Posterior vena cava (tissue), 2 donors: ENCODE measurements at regions of chr7 and their contacts with region 1.

Region 1: DNA sequence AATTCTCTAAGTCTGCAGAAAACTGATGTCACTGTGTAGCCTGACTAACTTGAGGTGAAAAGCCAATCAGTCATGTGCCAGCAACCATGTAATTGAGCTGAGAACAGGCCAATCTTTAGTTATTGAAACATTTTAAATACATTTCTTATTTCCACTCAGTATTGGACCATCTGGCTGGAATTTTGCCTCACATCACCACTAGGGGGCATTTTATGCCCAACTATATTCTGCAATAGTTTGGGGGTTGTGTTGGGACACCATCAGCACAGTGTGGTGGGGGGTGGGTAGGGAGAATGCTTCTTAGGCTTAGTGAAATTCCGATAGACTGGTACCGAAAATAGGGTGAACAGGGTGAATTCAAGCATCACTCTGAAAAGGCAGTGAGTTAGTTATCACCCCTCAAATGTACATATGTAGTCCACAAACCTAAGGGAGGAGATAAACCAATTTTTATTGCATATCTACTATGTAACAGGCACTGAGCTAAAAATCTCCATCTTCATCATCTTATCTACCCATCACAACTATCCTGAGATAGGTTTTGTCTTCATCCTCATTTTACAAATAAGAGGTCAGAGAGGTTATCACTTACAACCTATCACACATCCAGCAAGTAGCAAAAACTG is 17.8 kb downstream of the NPSR1 start:
- DNase-seq: no peak

Region 2: GRCh38 chr7:33300131-33300530 is 1375.7 kb before region 1 on chr7:
- intact Hi-C with region 1: no loop called
- DNase-seq: no peak

Region 3: GRCh38 chr7:34662058-34662708 is 13.7 kb before region 1 on chr7:
- intact Hi-C with region 1: loop called in 1 of 2 experiments (anchors 1 kb)
- DNase-seq: no peak

Region 4: DNA sequence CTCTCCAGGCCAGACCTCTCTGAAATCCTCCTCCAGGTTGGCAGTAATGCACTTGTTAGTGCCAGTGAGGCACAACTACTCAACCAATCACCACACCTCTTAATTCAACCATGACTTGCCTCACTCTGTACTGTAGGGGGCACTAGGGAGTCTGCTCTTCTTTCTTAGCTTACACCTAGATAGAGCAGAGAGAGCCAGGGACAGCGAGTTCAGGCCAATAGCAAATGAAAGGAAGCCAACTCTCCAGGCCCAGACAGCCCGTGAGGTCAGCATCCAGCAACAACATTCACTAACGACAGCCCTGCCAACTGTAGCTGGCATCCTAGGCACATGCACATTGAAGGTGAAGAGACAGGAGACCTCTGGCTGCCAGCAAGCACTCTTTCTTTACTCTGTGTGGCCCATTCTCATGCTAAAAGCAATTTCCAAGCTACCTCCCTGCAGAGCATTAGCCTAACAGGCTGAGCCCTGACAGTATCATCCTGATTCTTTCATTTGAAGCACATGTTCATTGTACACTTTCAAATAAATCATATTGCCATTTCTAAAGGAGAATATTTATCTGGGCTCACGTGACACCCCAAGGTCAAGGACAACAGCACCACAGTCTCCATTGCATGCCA is 225.1 kb after region 1 on chr7:
- intact Hi-C with region 1: no loop called
- DNase-seq: no peak

Region 5: DNA sequence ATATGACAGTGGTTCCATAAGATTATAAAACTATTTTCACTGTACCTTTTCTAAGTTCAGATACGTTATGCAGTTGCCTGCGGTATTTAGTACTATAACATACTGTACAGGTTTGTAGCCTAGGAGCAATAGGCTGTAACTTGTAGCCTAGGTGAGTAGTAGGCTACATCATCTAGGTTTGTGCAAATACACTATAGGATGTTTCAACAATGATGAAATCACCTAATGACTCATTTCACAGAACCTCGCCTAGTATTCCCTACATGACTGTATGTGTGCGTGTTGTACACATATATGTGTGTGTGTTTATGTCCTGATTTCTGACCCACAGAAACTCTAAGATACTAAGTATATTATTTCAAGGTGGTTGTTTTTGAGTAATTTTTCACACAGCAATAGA is 880.1 kb after region 1 on chr7:
- intact Hi-C with region 1: no loop called
- DNase-seq: no peak